Upper lobe of right lung (tissue), 1 donor: ENCODE measurements at regions of chr3 and their contacts with region 1.

Region 1: GRCh38 chr3:193788189-193788991 is 195.4 kb downstream of the OPA1 start:
- DNase-seq: no peak
- ATAC-seq: peak; percentile 90
- H3K4me3 ChIP-seq: no peak overlapping the region
- H3K27ac ChIP-seq: no peak overlapping the region
- H3K4me1 ChIP-seq: peaks cover 13% of the 10 kb centered on the region
- H3K27me3 ChIP-seq: no peaks in the 10 kb centered on the region
- CTCF ChIP-seq: peak; percentile 80

Region 2: GRCh38 chr3:194003125-194004057 is 215.0 kb after region 1 on chr3:
- intact Hi-C with region 1: loop called (anchors 10 kb)
- DNase-seq: peak; percentile 95
- ATAC-seq: peak; percentile 93
- H3K4me3 ChIP-seq: peak overlapping the region; percentile 32
- H3K27ac ChIP-seq: peak overlapping the region; percentile 73
- H3K4me1 ChIP-seq: peaks cover 29% of the 10 kb centered on the region
- H3K27me3 ChIP-seq: no peaks in the 10 kb centered on the region
- CTCF ChIP-seq: no peak

Region 3: GRCh38 chr3:194134757-194135528 is 346.6 kb after region 1 on chr3:
- intact Hi-C with region 1: loop called (anchors 5 kb)
- DNase-seq: peak; percentile 96
- ATAC-seq: peak; percentile 82
- H3K4me3 ChIP-seq: peak overlapping the region; percentile 68
- H3K27ac ChIP-seq: peak overlapping the region; percentile 94
- H3K4me1 ChIP-seq: peaks cover 60% of the 10 kb centered on the region
- H3K27me3 ChIP-seq: no peaks in the 10 kb centered on the region
- CTCF ChIP-seq: no peak

Region 4: GRCh38 chr3:194315088-194315964 is 526.9 kb after region 1 on chr3:
- intact Hi-C with region 1: loop called (anchors 2 kb)
- DNase-seq: peak; percentile 93
- ATAC-seq: peak; percentile 95
- H3K4me3 ChIP-seq: peak overlapping the region; percentile 57
- H3K27ac ChIP-seq: peak overlapping the region; percentile 40
- H3K4me1 ChIP-seq: peaks cover 26% of the 10 kb centered on the region
- H3K27me3 ChIP-seq: no peaks in the 10 kb centered on the region
- CTCF ChIP-seq: peak; percentile 94